SK-N-SH (cell line): ENCODE measurements at regions of chr14 and their contacts with region 1.

Region 1: DNA sequence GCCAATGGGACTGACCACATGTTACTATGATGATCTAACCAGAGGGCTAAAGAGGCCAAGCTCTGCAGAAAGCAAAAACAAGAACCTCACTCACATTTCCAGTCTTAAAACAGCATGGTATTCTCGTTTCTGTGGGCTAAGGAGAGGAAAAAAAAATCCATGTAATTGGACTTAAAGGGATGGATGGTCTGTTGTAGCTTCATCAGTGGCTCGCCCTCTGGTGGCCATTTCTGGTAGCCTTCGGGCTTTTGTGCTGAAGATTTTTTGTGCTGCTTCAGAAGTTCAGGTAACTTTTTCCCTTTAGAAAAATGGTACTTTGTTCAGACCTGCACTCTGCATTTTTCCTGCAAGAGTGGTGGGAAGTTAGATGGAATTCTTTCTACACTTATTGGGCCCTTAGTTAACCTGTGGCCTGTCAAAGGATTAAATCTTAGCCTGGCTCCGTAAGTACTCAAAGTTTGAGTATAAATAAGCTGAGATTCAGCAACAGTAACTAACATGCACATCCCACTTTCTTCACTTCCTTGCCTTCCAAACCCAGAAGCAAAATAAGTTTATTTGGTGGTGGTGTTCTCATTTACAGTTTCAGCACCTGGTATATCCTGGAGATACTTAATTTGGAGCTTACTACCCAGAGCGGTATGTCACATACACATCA is 22.3 kb downstream of the DCAF4 start:
- DNase-seq: peak; percentile 70
- H3K4me3 ChIP-seq: peak overlapping the region in 1 of 2 experiments; percentile 33; a peak in 1 of 4 replicates
- H3K27ac ChIP-seq: no peak overlapping the region
- H3K4me1 ChIP-seq: no peaks in the 10 kb centered on the region
- H3K27me3 ChIP-seq: no peaks in the 10 kb centered on the region
- CTCF ChIP-seq: peak; percentile 94
- EP300 ChIP-seq: no peak
- RAD21 ChIP-seq: peak; percentile 74

Region 2: DNA sequence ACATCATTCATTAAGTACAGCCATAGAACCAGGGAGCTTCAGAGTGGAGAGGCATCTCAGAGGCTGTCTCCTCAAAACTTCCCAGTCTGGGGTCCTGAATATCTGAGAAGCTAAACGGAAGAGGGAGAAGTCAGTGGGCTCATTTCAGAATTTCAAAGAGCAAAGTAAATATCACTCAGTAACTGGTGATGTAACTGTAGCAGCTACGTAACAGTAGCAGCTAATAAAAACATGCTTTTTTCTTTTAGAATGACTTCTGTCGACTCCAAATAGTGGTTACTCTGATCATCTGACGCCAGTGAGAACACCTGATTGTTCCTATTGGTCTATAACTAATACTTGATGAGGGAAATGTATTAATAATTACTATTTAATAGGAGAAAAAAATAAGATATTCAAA is 438.0 kb before region 1 on chr14:
- CTCF ChIA-PET with region 1: interaction called, 269 read pairs
- POLR2A ChIA-PET with region 1: interaction called, 3 read pairs
- DNase-seq: no peak
- H3K4me3 ChIP-seq: no peak overlapping the region
- H3K27ac ChIP-seq: no peak overlapping the region
- H3K4me1 ChIP-seq: no peaks in the 10 kb centered on the region; a peak in 1 of 4 replicates
- H3K27me3 ChIP-seq: peaks cover 19% of the 10 kb centered on the region; the same call in 1 of the 2 replicates
- CTCF ChIP-seq: no peak
- EP300 ChIP-seq: no peak
- RAD21 ChIP-seq: no peak

Region 3: GRCh38 chr14:72523424-72524294 is 425.0 kb before region 1 on chr14:
- CTCF ChIA-PET with region 1: interaction called, 269 read pairs
- POLR2A ChIA-PET with region 1: no interaction called
- DNase-seq: no peak
- H3K4me3 ChIP-seq: no peak overlapping the region
- H3K27ac ChIP-seq: no peak overlapping the region
- H3K4me1 ChIP-seq: no peaks in the 10 kb centered on the region; a peak in 1 of 4 replicates
- H3K27me3 ChIP-seq: no peaks in the 10 kb centered on the region
- CTCF ChIP-seq: no peak
- EP300 ChIP-seq: no peak
- RAD21 ChIP-seq: no peak

Region 4: GRCh38 chr14:72544619-72545387 is 403.8 kb before region 1 on chr14:
- CTCF ChIA-PET with region 1: interaction called, 10 read pairs
- POLR2A ChIA-PET with region 1: no interaction called
- DNase-seq: no peak
- H3K4me3 ChIP-seq: no peak overlapping the region
- H3K27ac ChIP-seq: no peak overlapping the region
- H3K4me1 ChIP-seq: peaks cover 0 to 9% of the 10 kb centered on the region in 2 experiments; a peak in 1 of 4 replicates
- H3K27me3 ChIP-seq: no peaks in the 10 kb centered on the region; the same call in 1 of the 2 replicates
- CTCF ChIP-seq: no peak
- EP300 ChIP-seq: no peak
- RAD21 ChIP-seq: no peak

Region 5: DNA sequence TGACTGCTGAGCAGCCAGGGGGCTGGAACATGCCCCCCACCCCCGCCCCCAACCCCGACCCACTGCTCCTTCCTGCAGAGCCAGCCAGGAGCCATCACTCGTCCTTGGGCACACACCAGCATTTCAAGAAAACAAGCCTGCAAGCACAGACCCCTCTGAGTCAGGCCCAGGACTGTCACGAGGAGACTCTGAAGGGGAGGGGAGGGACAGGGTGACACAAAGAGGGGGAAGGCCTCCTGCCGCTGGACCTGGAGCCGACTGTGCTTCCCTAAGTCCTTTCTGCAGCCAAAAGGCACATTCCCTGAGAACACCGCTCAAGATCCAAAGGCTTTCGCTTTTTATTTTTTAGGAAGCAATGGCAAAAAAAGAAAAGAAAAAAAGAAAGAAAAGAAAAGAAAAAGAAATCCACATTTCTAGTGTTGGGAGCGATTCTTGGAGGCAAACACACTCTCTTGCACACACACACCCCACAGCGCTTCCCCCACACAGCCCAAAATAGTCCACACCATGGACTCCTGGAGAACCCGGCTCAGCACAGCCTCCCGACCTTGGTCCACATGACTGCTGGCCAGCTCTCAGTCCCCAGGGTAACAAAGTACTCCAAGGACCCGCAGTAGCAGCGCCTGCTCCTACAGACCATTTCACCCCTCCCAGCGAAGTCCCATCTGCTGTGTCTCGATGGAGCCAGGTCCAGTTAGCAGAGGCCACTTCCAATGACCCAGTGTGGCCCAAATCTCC is 156.4 kb before region 1 on chr14:
- CTCF ChIA-PET with region 1: no interaction called
- POLR2A ChIA-PET with region 1: no interaction called
- DNase-seq: no peak
- H3K4me3 ChIP-seq: no peak overlapping the region
- H3K27ac ChIP-seq: no peak overlapping the region
- H3K4me1 ChIP-seq: peaks cover 0 to 25% of the 10 kb centered on the region in 2 experiments; a peak in 1 of 4 replicates
- H3K27me3 ChIP-seq: no peaks in the 10 kb centered on the region
- CTCF ChIP-seq: no peak
- EP300 ChIP-seq: no peak
- RAD21 ChIP-seq: no peak

Region 6: DNA sequence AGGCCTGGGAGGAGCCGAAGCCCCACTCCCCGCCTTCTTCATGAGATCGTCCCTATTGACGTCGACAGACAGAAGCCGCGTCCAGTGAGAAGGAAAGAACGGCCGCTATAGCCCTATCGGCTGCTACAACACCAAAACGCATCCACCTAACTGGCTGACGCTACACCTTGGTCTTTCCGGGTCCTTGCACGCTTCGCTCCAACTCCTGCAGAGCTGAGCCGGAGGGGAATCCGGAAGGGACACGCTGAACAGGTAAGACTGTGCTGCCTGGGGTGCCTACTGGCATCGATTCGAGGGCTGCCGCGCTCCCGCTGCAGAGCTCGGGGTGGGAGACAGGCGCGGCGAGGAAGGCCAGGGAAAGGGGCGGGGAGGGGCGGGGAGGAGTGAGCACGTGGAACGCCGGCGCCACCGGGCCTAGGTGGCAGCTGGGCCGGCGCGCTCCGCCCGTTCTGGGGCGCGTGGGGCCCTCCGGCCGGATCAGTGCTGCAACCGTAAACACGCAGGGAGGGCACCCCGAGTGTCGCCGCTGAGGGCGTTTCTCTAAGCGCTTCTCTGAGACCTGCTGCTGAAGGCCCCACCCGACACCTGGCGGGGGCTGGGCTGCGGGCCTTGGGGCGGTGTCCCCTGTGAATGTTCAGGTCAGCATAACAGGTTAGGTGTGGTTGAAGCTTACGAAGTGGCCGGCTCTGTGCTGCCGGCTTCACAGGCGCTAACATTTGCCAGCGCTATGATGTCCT is 22.1 kb before region 1 on chr14 and contains the start of gene DCAF4:
- CTCF ChIA-PET with region 1: interaction called, 34 read pairs
- POLR2A ChIA-PET with region 1: no interaction called
- DNase-seq: peak; percentile 99
- H3K4me3 ChIP-seq: peak within 1 kb of the TSS; percentile 79 to 93
- H3K27ac ChIP-seq: peak within 1 kb of the TSS; percentile 12 to 50; a peak in 3 of 4 replicates
- H3K4me1 ChIP-seq: peaks cover 0 to 12% of the 10 kb centered on the region in 2 experiments; a peak in 1 of 4 replicates
- H3K27me3 ChIP-seq: no peaks in the 10 kb centered on the region
- CTCF ChIP-seq: no peak
- EP300 ChIP-seq: no peak
- RAD21 ChIP-seq: no peak
- polyA plus RNA-seq, gene DCAF4: 17.9 and 27.8 TPM in 2 replicates

Region 7: GRCh38 chr14:72962829-72963312 is 14.3 kb after region 1 on chr14:
- CTCF ChIA-PET with region 1: interaction called, 30 read pairs
- POLR2A ChIA-PET with region 1: no interaction called
- DNase-seq: no peak
- H3K4me3 ChIP-seq: no peak overlapping the region
- H3K27ac ChIP-seq: no peak overlapping the region
- H3K4me1 ChIP-seq: no peaks in the 10 kb centered on the region
- H3K27me3 ChIP-seq: no peaks in the 10 kb centered on the region
- CTCF ChIP-seq: no peak
- EP300 ChIP-seq: no peak
- RAD21 ChIP-seq: no peak

Region 8: GRCh38 chr14:72972316-72972715 is 23.7 kb after region 1 on chr14:
- CTCF ChIA-PET with region 1: interaction called, 15 read pairs
- POLR2A ChIA-PET with region 1: no interaction called
- DNase-seq: no peak
- H3K4me3 ChIP-seq: no peak overlapping the region
- H3K27ac ChIP-seq: no peak overlapping the region
- H3K4me1 ChIP-seq: no peaks in the 10 kb centered on the region
- H3K27me3 ChIP-seq: no peaks in the 10 kb centered on the region
- CTCF ChIP-seq: no peak
- EP300 ChIP-seq: no peak
- RAD21 ChIP-seq: no peak